HEK293 (cell line): ENCODE measurements at regions of chr1 and their contacts with region 1.

Region 1: GRCh38 chr1:62131093-62131725 is 63.4 kb upstream of the L1TD1 start:
- H3K4me3 ChIP-seq: no peak overlapping the region
- H3K27ac ChIP-seq: no peak overlapping the region
- H3K4me1 ChIP-seq: no peaks in the 10 kb centered on the region
- CTCF ChIP-seq: peak; percentile 47; the same call in 1 of the 2 replicates

Region 2: DNA sequence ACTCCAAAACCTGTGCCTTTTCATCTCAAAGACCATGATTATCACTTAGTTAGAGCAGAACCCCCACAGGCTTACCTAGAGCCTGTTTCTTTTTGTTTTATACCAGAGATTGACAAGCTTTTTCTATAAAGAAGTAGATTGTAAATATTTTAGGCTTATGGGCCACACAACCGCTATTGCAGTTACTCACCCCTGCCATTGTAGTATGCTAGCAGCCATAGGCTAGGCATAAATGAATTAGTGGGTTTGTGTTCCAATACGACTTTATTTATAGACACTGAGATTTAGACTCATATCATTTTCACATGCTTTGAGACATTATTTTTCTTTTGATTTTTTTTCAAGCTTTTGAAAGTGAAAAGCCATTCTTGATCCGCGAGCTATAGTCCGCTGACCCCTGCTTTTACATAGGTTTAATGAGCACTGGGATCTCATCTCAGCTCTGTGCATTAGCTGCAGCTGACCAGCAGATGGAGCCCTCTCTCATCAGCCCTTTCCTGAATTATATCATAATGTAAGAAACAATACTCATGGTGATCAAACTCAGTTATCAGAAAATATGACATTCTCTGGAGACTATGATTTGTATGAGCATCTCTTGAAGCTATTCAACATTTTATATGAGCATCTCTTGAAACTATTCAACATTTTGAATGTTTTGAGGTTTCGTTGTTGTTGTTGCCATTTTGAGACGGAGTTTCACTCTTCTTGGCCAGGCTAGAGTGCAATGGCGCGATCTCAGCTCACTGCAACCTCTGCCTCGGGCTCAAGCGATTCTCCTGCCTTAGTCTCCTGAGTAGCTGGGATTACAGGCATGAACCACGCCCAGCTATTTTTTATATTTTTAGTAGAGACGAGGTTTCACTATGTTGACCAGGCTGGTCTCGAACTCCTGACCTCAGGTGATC is 48.5 kb before region 1 on chr1:
- CTCF ChIA-PET with region 1: interaction called, 75 read pairs
- POLR2A ChIA-PET with region 1: interaction called, 3 read pairs
- H3K4me3 ChIP-seq: no peak overlapping the region
- H3K27ac ChIP-seq: no peak overlapping the region
- H3K4me1 ChIP-seq: no peaks in the 10 kb centered on the region
- CTCF ChIP-seq: peak; percentile 47; the same call in 1 of the 2 replicates

Region 3: DNA sequence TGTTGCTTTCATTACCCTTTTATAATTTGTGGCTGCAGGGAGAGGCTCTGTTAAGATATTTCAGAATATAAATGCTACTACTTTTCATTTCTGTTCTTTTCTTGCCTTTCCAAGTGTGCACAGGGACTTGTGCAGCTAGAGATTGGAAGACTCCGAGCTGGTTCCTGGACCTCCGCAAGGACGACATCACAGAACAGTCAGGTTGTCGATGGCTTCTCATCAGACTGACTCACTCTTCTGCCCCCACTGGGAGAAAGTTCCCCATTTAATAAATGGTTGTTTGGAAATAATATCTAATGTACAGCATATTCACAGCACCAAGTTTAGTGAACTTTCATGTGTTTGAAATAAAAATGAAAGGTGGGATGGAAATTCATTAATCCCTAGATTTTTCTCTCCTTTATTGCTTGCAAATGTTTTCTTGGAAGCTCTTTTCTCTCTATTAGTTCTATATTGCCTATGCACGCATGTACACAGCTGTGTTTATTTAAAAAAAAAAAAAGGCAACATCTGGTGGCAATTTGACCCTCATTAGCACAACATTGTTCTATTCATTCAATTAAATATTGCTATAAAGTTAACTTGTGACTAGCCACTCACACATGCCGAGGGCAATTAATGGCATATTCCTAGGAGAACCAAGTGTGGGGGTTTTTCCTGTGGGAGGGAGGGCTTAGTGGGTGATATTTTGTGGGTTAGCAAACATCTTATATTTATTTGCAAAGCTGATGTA is 14.0 kb before region 1 on chr1:
- CTCF ChIA-PET with region 1: interaction called, 24 read pairs
- POLR2A ChIA-PET with region 1: interaction called, 6 read pairs
- H3K4me3 ChIP-seq: no peak overlapping the region
- H3K27ac ChIP-seq: no peak overlapping the region
- H3K4me1 ChIP-seq: no peaks in the 10 kb centered on the region
- CTCF ChIP-seq: no peak

Region 4: DNA sequence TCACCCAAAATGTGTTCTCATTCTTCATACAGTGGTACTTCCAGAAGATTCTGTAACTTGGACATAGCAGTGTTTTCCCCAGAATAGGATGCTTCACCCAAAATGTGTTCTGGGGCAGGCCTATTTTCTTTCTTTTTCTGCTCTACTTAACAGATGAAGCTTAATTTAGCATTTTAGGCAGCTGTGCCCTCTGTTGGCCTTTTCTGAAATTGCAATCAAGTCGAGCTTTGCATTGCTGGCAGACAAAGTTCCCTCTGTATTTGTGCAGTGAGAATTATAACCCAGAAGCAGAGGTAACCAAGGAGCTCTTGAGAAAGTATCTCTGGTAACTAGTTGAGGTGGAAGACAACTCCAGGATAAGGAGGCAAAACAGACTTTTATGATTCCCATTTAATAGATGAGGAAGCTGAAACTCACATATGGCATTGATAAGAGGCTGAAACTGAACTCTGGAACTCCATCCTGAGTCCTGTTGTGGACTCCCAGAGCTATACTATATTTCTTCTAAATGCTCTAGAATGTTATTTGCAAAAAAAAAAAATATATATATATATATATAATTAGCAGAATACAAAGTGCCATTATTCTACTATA is 13.1 kb after region 1 on chr1:
- CTCF ChIA-PET with region 1: interaction called, 51 read pairs
- POLR2A ChIA-PET with region 1: no interaction called
- H3K4me3 ChIP-seq: no peak overlapping the region
- H3K27ac ChIP-seq: no peak overlapping the region
- H3K4me1 ChIP-seq: no peaks in the 10 kb centered on the region
- CTCF ChIP-seq: no peak

Region 5: DNA sequence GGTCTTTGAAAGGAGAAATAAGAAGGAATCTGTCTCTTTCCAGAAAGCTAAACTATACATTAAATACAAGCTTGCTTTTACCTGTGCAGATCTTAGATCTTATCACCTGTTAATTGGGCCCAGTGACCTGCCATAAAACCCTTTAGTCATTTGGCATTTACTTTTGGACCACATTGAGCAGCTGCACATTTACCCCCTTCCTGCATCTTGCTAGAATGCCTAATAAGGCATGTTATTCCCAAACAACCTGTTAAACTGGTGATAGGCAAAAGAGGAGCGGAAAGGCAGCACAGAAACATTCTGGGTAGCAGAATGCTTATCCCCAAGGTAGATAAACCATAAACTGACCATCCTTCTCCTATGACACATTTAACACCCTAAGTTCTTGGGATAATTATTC is 23.5 kb after region 1 on chr1:
- CTCF ChIA-PET with region 1: interaction called, 11 read pairs
- POLR2A ChIA-PET with region 1: no interaction called
- H3K4me3 ChIP-seq: no peak overlapping the region
- H3K27ac ChIP-seq: no peak overlapping the region
- H3K4me1 ChIP-seq: no peaks in the 10 kb centered on the region
- CTCF ChIP-seq: no peak